Right ventricle myocardium inferior (tissue), 1 donor: ENCODE measurements at regions of chr16 and their contacts with region 1.

Region 1: GRCh38 chr16:67561824-67562525 is 351 bp upstream of the CTCF start:
- DNase-seq: peak; percentile 99
- ATAC-seq: peak; percentile 95

Region 2: DNA sequence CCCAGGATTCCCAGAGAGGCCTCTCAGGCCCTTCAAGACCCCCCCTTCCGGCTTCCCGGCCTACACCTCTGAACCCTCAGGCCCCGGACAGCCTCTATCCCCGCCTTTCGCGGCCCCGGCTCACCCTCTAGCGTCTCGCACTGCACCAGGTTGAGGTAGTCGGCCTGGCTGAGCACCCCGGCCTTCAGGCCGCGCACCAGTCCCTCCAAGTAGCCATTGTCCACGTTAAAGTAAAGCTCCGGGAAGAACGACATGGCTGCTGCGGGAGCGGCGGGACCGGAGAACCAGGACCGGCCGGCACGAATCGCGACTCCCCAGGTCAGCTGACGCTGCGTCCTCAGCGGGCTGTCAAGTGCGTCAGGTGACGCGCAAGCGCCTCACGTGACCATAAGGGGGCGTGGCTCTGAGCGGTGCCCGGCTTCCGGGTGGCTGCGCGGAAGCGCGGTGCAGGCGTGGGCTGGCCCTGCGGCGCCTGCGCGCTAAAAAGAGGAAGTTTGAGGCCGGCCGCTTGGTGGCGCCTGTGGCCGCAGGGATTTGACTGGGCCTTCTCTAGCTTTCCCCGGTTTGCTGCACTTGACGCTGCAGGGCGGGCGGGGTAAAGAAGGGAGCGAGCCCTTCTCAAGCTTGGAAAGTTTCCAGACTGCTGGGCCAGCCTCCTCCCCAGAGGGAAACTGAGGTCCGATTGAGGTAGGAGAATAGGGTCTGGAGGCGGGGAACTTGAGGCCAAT is 81.0 kb before region 1 on chr16 and contains the start of gene ATP6V0D1:
- intact Hi-C with region 1: no loop called
- DNase-seq: peak; percentile 99
- ATAC-seq: peak; percentile 97
- total RNA-seq, gene ATP6V0D1: 67.7 TPM

Region 3: DNA sequence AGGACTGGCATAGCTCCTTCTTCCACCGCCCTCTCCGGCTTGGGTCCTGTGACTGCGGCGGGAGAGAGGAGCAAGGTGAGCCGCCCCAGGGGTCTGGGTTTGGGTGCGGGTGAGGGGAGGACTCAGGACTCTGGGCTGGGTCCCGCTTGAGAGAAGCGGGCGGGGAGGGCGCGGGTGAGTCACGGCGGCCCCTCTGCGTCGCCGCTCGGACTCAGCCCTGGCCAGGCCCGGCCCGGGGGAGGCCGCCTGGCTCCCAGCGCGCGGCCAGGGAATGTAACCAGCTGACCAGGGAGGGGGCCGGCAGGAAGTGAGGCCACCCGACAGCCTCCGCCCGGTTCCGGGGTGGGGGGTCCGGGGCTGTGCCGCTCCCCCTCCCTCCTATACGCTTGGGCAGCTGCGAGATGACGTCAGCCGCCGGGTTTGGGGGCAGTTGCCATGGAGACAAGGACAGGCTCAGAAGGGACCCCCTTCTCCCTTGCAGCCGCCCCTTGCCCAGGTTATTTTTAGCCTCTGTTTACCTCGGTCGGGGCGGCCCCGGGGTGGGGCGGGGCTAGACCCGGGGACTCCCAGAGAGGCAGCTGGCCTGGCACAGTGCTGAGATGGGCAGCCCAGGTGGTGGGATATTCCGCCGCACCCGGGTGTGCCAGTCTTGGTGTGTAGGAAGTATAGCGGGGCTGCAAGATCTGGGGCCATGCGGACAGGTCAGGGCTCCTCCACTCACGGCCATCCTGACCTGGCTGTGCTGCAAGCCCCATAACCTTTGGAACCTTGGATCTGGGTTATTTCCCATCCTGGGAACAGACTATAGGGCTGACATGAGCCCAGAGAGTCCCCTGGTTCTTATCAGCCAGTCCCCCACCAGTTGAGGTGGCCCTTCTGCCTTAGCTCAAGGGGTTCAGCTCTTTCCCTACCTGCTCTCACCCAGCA is 31.7 kb before region 1 on chr16:
- intact Hi-C with region 1: loop called (anchors 2 kb)
- DNase-seq: peak; percentile 89
- ATAC-seq: peak; percentile 70

Region 4: GRCh38 chr16:67541391-67542263 is 20.3 kb before region 1 on chr16:
- intact Hi-C with region 1: loop called (anchors 2 kb)
- DNase-seq: peak; percentile 14
- ATAC-seq: no peak

Region 5: GRCh38 chr16:67546761-67547422 is 15.1 kb before region 1 on chr16:
- intact Hi-C with region 1: loop called (anchors 2 kb)
- DNase-seq: peak; percentile 87
- ATAC-seq: peak; percentile 69

Region 6: GRCh38 chr16:67613808-67614207 is 51.8 kb after region 1 on chr16:
- intact Hi-C with region 1: no loop called
- DNase-seq: no peak
- ATAC-seq: no peak

Region 7: DNA sequence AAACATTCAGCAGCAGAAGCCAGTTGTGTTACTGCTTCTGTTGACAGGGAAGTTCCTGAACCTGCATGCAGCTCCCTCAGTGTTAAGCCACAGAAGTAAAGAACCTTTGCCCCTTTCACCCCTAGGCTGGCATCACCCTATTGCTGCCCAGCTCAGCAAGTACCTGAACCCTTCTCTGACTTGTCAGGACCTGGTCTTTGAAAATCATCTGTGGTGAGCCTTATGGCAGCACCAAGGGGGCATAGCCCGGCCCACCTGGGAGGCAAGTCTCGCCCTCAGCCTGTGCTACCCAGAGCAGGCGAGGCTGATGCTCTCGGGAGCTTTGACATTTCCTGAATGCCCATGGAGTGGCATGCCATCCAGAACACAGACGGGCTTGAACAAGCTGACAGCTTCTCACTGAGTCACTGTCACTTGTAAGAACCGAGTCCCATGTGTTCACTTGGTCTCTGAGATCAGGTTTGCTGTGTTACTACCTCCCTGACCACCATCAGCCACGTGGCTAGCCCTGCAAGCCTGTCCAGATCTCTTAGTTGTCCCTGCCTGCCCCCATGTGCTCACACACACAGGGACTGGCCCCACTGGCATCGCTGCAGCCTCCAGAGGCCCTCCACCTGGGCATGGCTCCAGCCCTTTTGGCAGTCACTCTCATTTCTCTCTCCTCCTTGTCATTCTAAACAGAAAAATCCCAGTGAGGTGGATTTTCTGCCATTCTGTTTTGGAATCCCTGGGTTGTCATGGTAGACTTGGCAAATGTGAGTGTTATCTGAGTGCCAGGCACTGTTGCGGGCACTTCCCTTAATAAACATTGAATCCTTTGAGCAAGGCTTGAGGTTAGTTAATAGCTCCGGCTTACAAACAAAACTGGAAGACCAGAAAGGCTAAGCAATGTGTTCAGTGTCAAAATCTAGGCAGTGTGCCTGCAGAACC is 80.1 kb after region 1 on chr16:
- intact Hi-C with region 1: loop called (anchors 2 kb)
- DNase-seq: peak; percentile 82
- ATAC-seq: peak; percentile 91

Region 8: GRCh38 chr16:67667817-67668494 is 106.0 kb after region 1 on chr16:
- intact Hi-C with region 1: loop called (anchors 1 kb)
- DNase-seq: peak; percentile 90
- ATAC-seq: peak; percentile 91